Sigmoid colon (tissue), 7 donors: ENCODE measurements at regions of chr1 and their contacts with region 1.

Region 1: GRCh38 chr1:109984456-109985275 is at the start of gene AHCYL1:
- DNase-seq: peak; percentile 100
- H3K4me3 ChIP-seq: peak within 1 kb of the TSS; percentile 65 to 94 (median 75)
- H3K27ac ChIP-seq: peak within 1 kb of the TSS; percentile 94 to 98 (median 96)
- H3K4me1 ChIP-seq: peaks cover 0 to 60% (median 47%) of the 10 kb centered on the region in 4 donors
- H3K27me3 ChIP-seq: no peaks in the 10 kb centered on the region
- CTCF ChIP-seq: peak; percentile 94 to 99 (median 98)
- EP300 ChIP-seq: peak in 2 of 4 donors; percentile 48 to 53
- POLR2A ChIP-seq: peak; percentile 97
- total RNA-seq, gene AHCYL1: 58.2 to 76.7 (median 73.4) TPM

Region 2: DNA sequence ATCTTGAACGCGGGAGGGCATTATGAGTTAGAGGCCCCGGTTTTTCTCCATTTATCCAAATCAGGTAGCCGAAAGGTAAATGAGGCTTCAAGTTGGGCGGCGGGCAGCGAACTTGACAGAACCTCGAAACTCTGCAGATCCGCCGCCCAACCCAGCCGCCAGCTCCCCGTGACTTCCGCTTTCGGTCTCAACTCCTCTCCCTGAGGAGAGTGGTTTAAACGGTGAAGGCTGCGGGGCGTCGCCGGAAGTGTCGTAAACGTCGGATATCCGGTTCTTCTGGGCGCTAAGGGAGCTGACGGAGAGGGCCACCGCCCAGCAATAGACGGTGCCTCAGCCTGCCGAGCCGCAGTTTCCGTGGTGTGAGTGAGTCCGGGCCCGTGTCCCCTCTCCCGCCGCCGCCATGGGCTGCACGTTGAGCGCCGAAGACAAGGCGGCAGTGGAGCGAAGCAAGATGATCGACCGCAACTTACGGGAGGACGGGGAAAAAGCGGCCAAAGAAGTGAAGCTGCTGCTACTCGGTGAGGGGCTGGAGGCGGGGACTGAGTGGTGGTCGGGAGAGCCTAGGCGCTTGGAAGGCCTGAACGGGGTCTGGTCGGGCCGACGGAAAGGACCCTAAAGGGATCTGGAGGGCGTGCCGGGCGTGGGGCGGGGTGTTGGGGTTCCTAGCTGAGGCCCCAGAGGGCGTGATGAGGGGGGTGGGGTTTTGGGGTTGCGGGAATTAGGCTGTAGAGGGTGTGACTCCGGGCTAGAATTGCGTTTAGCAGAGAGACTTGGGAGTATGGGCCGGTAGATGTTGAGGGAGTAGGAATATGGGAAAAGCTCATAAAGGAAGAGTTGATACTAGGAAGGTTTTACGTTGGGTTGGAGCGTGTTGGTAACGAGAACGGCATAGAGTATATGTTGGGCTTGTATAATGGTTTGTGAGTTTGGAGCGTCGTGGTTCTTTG is 436.1 kb before region 1 on chr1 and contains the start of gene GNAI3:
- intact Hi-C with region 1: loop called (anchors 5 kb)
- DNase-seq: peak; percentile 98
- H3K4me3 ChIP-seq: peak within 1 kb of the TSS; percentile 72 to 94 (median 89)
- H3K27ac ChIP-seq: peak within 1 kb of the TSS; percentile 92 to 97 (median 95)
- H3K4me1 ChIP-seq: peaks cover 0 to 54% (median 40%) of the 10 kb centered on the region in 4 donors
- H3K27me3 ChIP-seq: no peaks in the 10 kb centered on the region
- CTCF ChIP-seq: no peak
- EP300 ChIP-seq: peak in 2 of 4 donors; percentile 6 to 33
- POLR2A ChIP-seq: peak; percentile 96 to 99
- total RNA-seq, gene GNAI3: 5.7 to 6.4 (median 6.1) TPM

Region 3: DNA sequence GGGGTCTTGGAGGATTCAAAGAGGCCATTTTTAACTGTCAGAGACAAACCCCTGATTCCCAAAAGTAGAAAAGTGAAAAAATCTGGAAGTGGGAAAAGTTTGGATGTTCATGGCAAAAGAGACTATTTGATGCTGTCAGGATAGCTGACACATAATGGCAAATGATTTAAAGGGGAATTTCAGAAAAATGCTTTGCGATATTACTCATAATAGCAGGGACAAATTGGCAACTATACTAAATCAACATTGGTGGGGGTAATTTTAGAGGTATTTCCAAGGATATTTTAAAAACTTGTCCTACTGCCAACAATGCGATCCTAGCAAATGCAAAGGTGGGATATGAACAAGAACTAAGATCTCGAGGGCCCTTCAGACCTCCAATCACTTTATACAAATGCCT is 334.1 kb before region 1 on chr1:
- intact Hi-C with region 1: loop called (anchors 5 kb)
- DNase-seq: no peak
- H3K4me3 ChIP-seq: no peak overlapping the region
- H3K27ac ChIP-seq: no peak overlapping the region
- H3K4me1 ChIP-seq: peaks cover 0 to 14% (median 12%) of the 10 kb centered on the region in 4 donors
- H3K27me3 ChIP-seq: no peaks in the 10 kb centered on the region
- CTCF ChIP-seq: no peak
- EP300 ChIP-seq: no peak
- POLR2A ChIP-seq: no peak

Region 4: GRCh38 chr1:109790735-109791494 is 193.8 kb before region 1 on chr1:
- intact Hi-C with region 1: loop called (anchors 5 kb)
- DNase-seq: peak; percentile 61
- H3K4me3 ChIP-seq: no peak overlapping the region
- H3K27ac ChIP-seq: peak overlapping the region in 2 of 4 donors; percentile 1 to 37
- H3K4me1 ChIP-seq: peaks cover 0 to 44% (median 38%) of the 10 kb centered on the region in 4 donors
- H3K27me3 ChIP-seq: no peaks in the 10 kb centered on the region
- CTCF ChIP-seq: no peak
- EP300 ChIP-seq: no peak
- POLR2A ChIP-seq: no peak

Region 5: DNA sequence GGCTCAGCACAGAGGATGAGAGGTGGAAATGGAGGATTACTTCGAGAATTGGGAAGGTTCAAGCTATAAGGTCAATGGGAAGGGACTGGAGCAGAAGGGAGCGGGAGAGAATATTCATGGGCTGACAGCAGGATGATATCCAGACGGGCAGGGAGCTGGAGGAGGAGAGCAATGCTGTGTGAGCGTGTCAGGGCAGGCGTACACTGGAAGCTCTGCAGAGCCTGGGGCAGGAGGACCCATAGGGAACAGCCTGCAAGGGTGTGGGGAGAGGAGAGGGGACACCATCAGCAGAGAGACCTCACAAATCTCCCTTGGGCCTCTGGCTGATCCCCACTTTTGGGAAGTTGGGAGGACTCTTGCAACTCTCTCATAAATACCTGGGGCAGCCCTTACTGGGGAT is 60.4 kb before region 1 on chr1:
- intact Hi-C with region 1: loop called (anchors 2 kb)
- DNase-seq: no peak
- H3K4me3 ChIP-seq: no peak overlapping the region
- H3K27ac ChIP-seq: peak overlapping the region in 3 of 4 donors; percentile 62 to 75 (median 69)
- H3K4me1 ChIP-seq: peaks cover 0 to 59% (median 46%) of the 10 kb centered on the region in 4 donors
- H3K27me3 ChIP-seq: no peaks in the 10 kb centered on the region
- CTCF ChIP-seq: no peak
- EP300 ChIP-seq: no peak
- POLR2A ChIP-seq: no peak

Region 6: GRCh38 chr1:109954041-109954512 is 30.6 kb before region 1 on chr1:
- intact Hi-C with region 1: no loop called
- DNase-seq: no peak
- H3K4me3 ChIP-seq: no peak overlapping the region
- H3K27ac ChIP-seq: peak overlapping the region in 3 of 4 donors; percentile 41 to 77 (median 70)
- H3K4me1 ChIP-seq: peaks cover 0 to 46% (median 28%) of the 10 kb centered on the region in 4 donors
- H3K27me3 ChIP-seq: no peaks in the 10 kb centered on the region
- CTCF ChIP-seq: no peak
- EP300 ChIP-seq: peak in 1 of 4 donors; percentile 53
- POLR2A ChIP-seq: no peak